ENCODE measurements at regions of chr1 and their contacts with region 1.

Region 1: DNA sequence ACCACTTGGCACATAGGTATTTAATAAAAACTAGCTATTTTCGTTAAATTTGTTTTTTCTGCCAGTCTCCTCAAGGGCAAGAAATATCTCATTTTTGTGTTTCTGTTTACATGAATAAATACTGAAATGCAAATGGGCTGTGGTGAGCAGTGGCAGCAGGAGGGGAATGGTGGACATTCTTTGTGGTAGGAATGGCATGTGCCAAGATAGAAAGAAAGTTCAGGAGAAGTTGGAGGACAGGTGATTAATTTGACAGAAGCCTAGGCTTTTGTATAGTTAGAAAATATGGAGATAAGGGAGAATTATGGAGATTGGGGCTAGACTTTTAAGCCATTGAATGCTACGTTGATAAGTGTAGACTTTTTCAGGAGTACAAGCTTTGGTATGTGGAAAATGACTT is 8.6 kb downstream of the RAP1A start:
- DNase-seq: no peak
- H3K4me3 Mint-ChIP-seq: peak overlapping the region; percentile 65
- H3K27ac Mint-ChIP-seq: peak overlapping the region; percentile 84
- H3K4me1 Mint-ChIP-seq: peaks cover 78% of the 10 kb centered on the region
- H3K27me3 Mint-ChIP-seq: no peaks in the 10 kb centered on the region

Region 2: DNA sequence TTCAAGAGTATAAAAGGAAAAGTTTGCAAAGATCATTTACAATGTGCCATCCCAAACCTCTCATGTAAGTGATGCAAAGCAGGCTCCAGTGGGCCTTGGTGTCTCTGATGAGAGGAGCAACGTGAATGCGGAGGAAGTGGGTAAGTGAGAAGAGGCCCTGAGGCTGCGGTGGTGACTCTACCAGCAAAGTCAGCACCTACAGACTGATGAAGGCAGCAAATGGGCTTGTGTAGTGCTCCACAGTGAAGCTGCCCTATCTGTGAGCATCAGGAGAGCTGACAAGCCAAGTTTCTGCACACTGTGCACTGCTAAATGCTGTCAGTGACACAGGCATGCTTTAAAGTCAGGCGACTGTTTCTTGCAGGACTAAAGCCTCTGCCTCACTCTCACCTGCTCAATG is 24.2 kb before region 1 on chr1:
- intact Hi-C with region 1: loop called (anchors 1 kb)
- DNase-seq: peak; percentile 82
- H3K4me3 Mint-ChIP-seq: peak overlapping the region; percentile 66
- H3K27ac Mint-ChIP-seq: peak overlapping the region; percentile 97
- H3K4me1 Mint-ChIP-seq: peaks cover 70% of the 10 kb centered on the region
- H3K27me3 Mint-ChIP-seq: no peaks in the 10 kb centered on the region

Region 3: GRCh38 chr1:111648806-111649205 is 20.7 kb after region 1 on chr1:
- intact Hi-C with region 1: no loop called
- DNase-seq: no peak
- H3K4me3 Mint-ChIP-seq: no peak overlapping the region
- H3K27ac Mint-ChIP-seq: peak overlapping the region; percentile 67
- H3K4me1 Mint-ChIP-seq: peaks cover 62% of the 10 kb centered on the region
- H3K27me3 Mint-ChIP-seq: no peaks in the 10 kb centered on the region

Region 4: DNA sequence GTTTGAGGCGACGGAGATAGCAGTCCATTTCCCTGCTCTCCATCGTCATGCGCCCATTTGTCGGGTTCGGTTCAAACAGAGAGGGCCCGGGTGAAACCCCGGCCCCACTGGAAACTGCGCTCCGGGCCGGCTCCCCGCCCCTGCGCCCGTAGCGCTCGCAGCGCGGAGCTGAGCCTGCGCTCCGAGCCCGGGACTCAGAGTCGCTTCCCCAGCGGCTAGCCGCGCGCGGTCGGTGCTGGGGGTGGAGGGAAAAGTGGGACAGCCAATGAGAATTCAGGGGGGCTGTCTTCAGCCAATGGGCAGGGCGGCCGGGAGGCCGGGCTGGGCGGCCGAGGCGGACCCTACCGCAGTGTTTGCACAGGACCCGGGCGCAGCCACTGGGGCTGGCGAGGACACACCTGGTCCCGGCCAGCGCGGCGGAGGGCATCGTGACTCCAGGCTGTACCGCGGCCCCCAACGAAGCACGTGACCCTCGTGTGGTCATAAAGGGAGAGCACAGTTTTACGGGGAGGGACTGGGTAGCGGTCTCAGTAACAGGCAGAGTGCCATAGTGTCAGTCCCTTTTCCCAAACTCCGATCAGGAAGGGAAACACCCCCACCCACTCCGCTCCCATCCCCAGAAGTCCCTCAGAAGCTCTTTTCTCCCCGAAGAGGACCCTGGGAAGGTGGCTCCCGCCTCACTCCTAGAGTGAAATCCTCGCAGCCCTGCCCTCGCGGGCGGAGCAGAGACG is 111.2 kb after region 1 on chr1 and contains the start of gene INKA2:
- intact Hi-C with region 1: loop called (anchors 5 kb)
- DNase-seq: peak; percentile 80
- H3K4me3 Mint-ChIP-seq: peak within 1 kb of the TSS; percentile 93
- H3K27ac Mint-ChIP-seq: peak within 1 kb of the TSS; percentile 88
- H3K4me1 Mint-ChIP-seq: peaks cover 16% of the 10 kb centered on the region
- H3K27me3 Mint-ChIP-seq: peaks cover 38% of the 10 kb centered on the region
- total RNA-seq, gene INKA2: 0.43 and 2.2 TPM in 2 replicates

Region 5: DNA sequence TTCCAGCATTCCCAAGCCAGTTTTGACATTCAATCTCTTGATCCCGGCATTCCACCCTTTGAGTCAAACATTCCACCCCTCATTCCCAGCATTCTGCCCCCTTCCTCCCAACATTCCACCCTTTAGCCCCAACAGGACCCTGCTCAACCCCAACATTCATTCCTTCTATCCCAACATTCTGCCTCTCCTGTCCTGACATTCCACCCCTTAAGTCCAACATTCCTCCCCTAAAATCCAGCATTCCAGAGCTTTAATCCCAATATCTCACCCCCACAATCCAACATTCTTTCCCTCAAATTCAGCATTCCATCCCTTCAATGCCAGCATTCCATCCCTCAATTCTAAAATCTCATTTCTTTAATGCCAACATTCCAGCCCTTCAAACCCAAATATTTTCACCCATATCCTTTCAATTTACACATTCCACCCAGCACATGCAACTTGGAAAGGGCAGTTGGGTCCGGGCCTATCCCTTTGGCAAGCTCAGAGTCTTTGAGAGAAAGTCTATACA is 150.4 kb after region 1 on chr1:
- intact Hi-C with region 1: no loop called
- DNase-seq: no peak
- H3K4me3 Mint-ChIP-seq: no peak overlapping the region
- H3K27ac Mint-ChIP-seq: no peak overlapping the region
- H3K4me1 Mint-ChIP-seq: no peaks in the 10 kb centered on the region
- H3K27me3 Mint-ChIP-seq: peaks cover 14% of the 10 kb centered on the region